Adrenal gland (tissue), 19 donors: ENCODE measurements at regions of chr22 and their contacts with region 1.

Region 1: DNA sequence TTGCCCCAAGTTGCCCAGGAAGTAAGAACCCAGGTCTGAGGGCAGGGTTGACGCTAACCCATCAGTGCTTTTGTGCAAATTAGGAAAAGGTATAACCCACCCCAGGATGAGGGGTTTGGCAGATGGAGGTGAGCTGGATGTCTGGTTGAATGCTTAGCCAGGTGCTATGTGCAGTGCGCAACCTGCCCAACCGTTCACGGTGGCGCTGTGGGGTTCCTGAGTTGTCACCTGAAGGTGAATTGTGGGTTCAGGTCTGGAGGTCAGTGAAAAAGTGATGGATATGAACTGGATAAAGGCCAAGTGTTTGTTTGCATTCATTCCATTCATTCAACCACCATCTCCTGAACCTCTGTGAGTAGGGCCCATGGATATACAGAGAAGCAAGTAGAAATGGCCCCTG is 14.3 kb upstream of the LGALS2 start:
- DNase-seq: no peak
- H3K4me3 ChIP-seq: no peak overlapping the region
- H3K27ac ChIP-seq: no peak overlapping the region
- H3K4me1 ChIP-seq: peaks cover 4 to 10% of the 10 kb centered on the region in 2 donors
- H3K27me3 ChIP-seq: no peaks in the 10 kb centered on the region
- CTCF ChIP-seq: no peak
- POLR2A ChIP-seq: no peak

Region 2: DNA sequence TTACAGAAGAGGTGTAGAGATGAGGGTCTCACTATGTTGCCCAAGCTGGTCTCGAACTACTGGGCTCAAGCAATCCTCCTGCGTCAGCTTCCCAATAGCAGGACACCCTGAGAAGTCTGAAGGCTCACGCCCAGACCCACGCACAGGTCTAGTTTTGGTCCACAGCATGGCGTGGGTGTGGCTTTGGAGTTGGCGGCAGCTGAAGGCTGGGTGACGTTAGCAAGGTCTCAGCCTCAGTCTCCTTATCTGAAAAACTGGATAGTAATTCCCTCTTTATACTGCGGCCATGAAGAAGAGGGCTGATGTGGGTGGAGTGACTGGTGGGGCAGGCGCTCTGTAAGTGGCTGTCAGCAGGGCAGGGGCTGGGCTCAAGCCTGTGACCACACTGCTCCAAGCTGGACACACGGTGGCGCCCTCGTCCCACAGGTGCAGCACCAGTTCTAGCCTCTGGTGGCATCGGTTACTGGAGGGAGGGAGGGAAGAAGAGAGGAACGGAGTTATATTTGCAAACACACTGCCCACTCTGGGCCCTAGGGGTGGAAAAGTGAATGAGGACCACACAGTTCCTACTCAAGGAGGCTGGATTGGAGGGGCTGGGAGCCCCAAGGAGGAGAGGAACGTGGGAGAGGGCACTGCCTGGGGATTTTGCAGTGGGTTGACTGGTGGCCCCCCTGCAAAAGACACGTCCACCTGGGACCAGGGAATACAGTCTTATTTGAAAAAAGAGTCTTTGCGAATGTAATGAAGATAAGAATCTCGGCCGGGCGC is 55.5 kb before region 1 on chr22:
- intact Hi-C with region 1: loop called in 1 of 2 experiments (anchors 2 kb)
- DNase-seq: peak; percentile 94 to 98 (median 97)
- H3K4me3 ChIP-seq: no peak overlapping the region
- H3K27ac ChIP-seq: peak overlapping the region in 2 of 5 donors; percentile 39 to 57
- H3K4me1 ChIP-seq: peaks cover 0 to 10% of the 10 kb centered on the region in 2 donors
- H3K27me3 ChIP-seq: no peaks in the 10 kb centered on the region
- CTCF ChIP-seq: peak; percentile 91 to 100 (median 100)
- POLR2A ChIP-seq: peak in 1 of 2 donors; percentile 11

Region 3: DNA sequence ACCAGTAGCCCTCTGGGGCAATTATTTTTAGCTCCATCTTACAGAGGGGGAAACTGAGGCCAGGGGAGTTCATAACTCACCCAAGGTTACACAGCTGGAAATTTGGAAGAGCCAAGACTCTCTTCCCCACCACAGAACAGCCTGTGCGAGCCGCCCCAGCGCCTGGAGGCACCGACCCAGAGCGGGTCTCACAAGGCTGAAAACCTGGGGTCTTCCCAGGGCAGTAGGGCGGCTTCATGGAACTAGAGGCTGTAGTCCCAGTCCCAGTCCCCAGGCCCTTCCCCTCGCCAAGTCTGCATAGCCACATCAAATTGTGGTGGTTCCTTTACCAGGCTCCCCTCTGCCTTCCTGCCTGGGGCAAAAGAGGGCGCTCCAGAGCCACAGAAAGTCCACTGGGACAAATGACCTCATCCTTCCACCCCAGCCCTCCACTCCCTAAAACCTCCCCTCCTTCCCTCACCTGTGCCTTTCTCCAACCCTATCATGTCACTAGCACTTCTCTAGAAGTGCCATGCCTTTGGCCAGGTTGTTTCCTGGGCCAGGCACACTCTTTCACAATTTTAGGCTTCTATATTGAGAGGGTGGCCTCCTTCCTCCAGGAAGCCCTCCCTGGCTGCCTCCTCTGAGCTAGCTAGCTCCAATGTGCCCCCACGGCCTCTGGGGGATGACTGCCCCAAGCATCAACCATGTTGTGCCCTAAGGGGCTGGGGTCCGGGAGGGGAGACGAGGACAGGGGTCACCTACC is 49.1 kb before region 1 on chr22:
- intact Hi-C with region 1: loop called (anchors 2 to 5 kb)
- DNase-seq: peak; percentile 78 to 90 (median 87)
- H3K4me3 ChIP-seq: peak overlapping the region in 1 of 4 donors; percentile 20
- H3K27ac ChIP-seq: peak overlapping the region; percentile 92 to 97 (median 97)
- H3K4me1 ChIP-seq: peaks cover 36 to 54% of the 10 kb centered on the region in 2 donors
- H3K27me3 ChIP-seq: no peaks in the 10 kb centered on the region
- CTCF ChIP-seq: peak; percentile 59 to 92 (median 80)
- POLR2A ChIP-seq: no peak